AG04450 (cell line): ENCODE measurements at regions of chr18 and their contacts with region 1.

Region 1: GRCh38 chr18:28972333-28972907 is 795.5 kb upstream of the CDH2 start:
- DNase-seq: no peak
- H3K4me3 ChIP-seq: no peak overlapping the region
- H3K27ac ChIP-seq: no peak overlapping the region
- H3K27me3 ChIP-seq: no peaks in the 10 kb centered on the region
- CTCF ChIP-seq: no peak

Region 2: GRCh38 chr18:28961669-28962228 is 10.7 kb before region 1 on chr18:
- CTCF ChIA-PET with region 1: interaction called, 11 read pairs
- POLR2A ChIA-PET with region 1: no interaction called
- DNase-seq: peak; percentile 1
- H3K4me3 ChIP-seq: no peak overlapping the region
- H3K27ac ChIP-seq: no peak overlapping the region
- H3K27me3 ChIP-seq: no peaks in the 10 kb centered on the region
- CTCF ChIP-seq: peak; percentile 62

Region 3: GRCh38 chr18:29259838-29260237 is 287.4 kb after region 1 on chr18:
- CTCF ChIA-PET with region 1: no interaction called
- POLR2A ChIA-PET with region 1: no interaction called
- DNase-seq: no peak
- H3K4me3 ChIP-seq: no peak overlapping the region
- H3K27ac ChIP-seq: no peak overlapping the region
- H3K27me3 ChIP-seq: no peaks in the 10 kb centered on the region
- CTCF ChIP-seq: no peak